Activated T-helper 1 cell treated with anti-CD3 and anti-CD28 coated beads, Interleukin-12 subunit alpha, Interleukin-12 subunit beta, Interleukin-2, Interleukin-4 antibody, amounts not matched to agents 30 ng/mL and 10 ng/mL and 1 ng/mL, durations not matched to agents 14 hours and 24 hours and 36 hours (primary cell): ENCODE measurements at regions of chr1 and their contacts with region 1.

Region 1: DNA sequence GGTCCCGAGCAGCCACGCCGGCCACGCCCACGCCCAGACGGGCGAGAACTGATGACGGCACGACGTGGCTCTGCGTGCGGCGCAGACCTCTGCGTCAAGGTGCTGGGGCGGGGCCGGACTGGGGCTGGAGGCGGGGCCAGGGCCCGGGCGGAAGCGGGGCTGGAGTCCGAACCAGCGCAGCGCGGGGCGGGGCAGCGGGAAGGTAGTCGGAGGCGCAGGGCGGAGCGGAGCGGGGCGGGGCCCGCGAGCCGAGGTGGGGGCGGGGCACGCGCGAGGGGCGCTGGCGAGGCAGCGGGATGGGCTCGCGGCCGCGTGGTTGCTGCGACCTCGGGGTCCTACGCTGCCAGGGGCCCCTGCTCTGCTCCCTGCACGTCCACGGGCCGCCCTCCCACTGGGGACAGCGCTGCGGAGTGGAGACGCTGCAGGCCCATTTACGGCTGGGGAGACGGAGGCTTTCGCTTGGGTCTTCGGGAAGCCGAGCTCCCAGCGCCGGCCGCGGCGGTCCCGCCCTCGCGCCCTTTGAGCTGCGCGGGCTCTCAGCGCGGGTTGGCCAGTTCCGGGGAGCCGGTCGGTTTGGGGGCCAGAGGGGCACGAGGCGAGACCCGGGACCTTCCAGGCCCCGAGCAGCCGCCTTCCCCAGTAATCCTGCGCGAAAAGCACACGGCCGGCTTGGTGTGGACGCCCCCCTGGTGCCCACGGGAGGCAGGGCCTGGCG is at the start of gene PEX10:
- DNase-seq: peak; percentile 99
- H3K4me3 Mint-ChIP-seq: peak within 1 kb of the TSS; percentile 90
- H3K27ac Mint-ChIP-seq: peak within 1 kb of the TSS; percentile 89
- H3K4me1 Mint-ChIP-seq: peaks cover 38% of the 10 kb centered on the region
- H3K27me3 Mint-ChIP-seq: no peaks in the 10 kb centered on the region
- total RNA-seq, gene PEX10: 22.4 and 24.0 TPM in 2 replicates

Region 2: GRCh38 chr1:2133039-2133878 is 279.4 kb before region 1 on chr1:
- intact Hi-C with region 1: loop called (anchors 1 kb)
- DNase-seq: peak; percentile 95
- H3K4me3 Mint-ChIP-seq: peak overlapping the region; percentile 73
- H3K27ac Mint-ChIP-seq: peak overlapping the region; percentile 48
- H3K4me1 Mint-ChIP-seq: peaks cover 6% of the 10 kb centered on the region
- H3K27me3 Mint-ChIP-seq: peaks cover 8% of the 10 kb centered on the region

Region 3: DNA sequence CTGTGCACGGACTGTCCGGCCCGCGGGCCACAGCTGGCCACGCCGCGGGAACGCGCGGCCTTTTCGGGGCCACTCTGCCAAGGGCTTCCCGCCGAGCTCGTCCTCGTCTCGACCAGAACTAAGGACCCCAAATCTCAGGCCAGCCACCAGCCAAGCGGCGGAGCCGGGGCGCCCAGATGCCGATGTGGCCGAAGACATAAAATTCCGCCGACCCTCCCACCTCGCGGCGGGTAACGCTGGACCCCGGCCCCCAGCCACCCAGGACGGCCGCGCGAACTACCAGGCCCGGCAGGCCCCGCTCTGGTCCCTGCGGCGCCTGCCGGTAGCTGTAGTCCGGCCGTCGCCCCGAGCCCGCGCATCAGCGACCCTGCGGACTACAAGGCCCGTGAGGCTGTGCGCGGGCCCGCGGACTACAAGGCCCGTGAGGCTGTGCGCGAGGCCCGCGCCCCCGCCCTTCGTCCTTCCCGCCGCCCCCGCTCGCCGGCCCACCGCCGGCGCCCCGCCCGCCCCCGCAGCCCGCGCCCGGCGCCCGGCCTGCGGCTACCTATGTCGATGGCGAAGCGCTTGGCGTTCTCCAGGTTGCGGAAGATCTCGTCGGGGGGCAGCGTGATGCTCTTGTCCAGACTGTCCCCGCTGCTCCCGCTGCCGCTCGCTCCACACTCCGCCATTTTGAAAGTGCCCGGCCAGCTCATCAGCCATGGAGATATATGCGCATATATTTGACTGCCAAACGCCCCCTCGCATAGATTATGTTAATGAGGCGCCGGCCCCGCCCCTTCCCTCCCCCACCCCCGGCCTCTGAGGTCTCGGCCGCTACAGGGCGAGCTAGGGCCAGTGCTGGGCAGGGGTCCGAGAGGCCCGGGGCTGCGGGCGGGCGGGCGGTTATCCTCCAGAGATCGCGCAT is 113.5 kb after region 1 on chr1 and contains the start of gene PANK4:
- intact Hi-C with region 1: loop called (anchors 1 kb)
- DNase-seq: peak; percentile 86
- H3K4me3 Mint-ChIP-seq: peak within 1 kb of the TSS; percentile 94
- H3K27ac Mint-ChIP-seq: peak within 1 kb of the TSS; percentile 98
- H3K4me1 Mint-ChIP-seq: peaks cover 38% of the 10 kb centered on the region
- H3K27me3 Mint-ChIP-seq: peaks cover 15% of the 10 kb centered on the region
- total RNA-seq, gene PANK4: 65.6 and 67.6 TPM in 2 replicates

Region 4: GRCh38 chr1:2578758-2579118 is 166.1 kb after region 1 on chr1:
- intact Hi-C with region 1: loop called (anchors 2 kb)
- DNase-seq: no peak
- H3K4me3 Mint-ChIP-seq: peak overlapping the region; percentile 42
- H3K27ac Mint-ChIP-seq: peak overlapping the region; percentile 95
- H3K4me1 Mint-ChIP-seq: peaks cover 83% of the 10 kb centered on the region
- H3K27me3 Mint-ChIP-seq: no peaks in the 10 kb centered on the region

Region 5: GRCh38 chr1:2642560-2643413 is 230.1 kb after region 1 on chr1:
- intact Hi-C with region 1: loop called (anchors 1 kb)
- DNase-seq: peak; percentile 93
- H3K4me3 Mint-ChIP-seq: peak overlapping the region; percentile 85
- H3K27ac Mint-ChIP-seq: peak overlapping the region; percentile 93
- H3K4me1 Mint-ChIP-seq: no peaks in the 10 kb centered on the region
- H3K27me3 Mint-ChIP-seq: no peaks in the 10 kb centered on the region

Region 6: DNA sequence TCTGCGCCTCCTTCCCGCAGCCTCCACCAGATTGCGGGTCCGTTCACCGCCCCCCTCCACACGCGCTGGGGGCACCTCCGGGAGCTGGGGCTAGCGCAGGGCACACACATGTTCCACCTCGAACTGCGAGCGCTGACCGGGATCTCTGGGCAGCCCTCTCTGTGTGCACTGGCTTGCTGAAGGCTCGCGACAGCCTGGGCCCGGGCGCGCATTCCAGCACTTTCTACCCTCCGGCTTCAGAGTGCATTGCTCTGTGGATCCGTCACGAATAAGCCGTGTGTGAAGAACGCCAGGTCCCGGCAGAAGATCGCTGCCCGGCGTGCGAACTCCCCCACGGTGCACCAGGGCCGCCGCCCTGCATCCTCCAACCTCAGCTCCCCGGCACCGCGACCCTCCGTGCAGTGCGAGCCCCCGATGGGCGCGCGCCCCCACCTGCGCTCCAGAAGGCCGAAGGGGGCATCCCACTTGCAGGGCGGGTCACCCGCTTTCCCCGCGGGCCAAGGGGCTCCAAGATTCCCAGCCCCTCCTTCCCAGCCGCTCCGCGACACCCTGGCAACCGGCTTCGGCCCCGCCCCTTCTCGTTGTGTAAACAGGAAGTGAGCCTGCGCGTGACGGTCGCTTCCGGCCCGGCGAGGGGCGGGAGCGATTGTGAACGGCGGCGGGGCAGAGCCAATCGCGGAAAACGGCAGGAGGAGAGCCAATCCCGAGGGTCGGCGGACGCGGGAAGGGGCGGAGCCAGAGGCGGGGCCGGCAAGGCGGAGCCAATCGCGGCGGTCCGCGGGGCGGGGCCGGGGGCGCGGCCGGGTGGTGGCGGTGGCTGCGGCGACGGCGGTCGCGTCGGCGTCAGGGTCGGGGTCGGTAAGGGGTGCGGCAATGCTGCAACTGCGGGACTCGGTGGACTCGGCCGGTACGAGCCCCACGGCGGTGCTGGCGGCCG is 1211.8 kb after region 1 on chr1 and contains the start of gene TPRG1L:
- intact Hi-C with region 1: loop called (anchors 10 kb)
- DNase-seq: peak; percentile 98
- H3K4me3 Mint-ChIP-seq: peak within 1 kb of the TSS; percentile 94
- H3K27ac Mint-ChIP-seq: peak within 1 kb of the TSS; percentile 93
- H3K4me1 Mint-ChIP-seq: peaks cover 27% of the 10 kb centered on the region
- H3K27me3 Mint-ChIP-seq: peaks cover 8% of the 10 kb centered on the region
- total RNA-seq, gene TPRG1L: 10.3 and 12.5 TPM in 2 replicates

Region 7: DNA sequence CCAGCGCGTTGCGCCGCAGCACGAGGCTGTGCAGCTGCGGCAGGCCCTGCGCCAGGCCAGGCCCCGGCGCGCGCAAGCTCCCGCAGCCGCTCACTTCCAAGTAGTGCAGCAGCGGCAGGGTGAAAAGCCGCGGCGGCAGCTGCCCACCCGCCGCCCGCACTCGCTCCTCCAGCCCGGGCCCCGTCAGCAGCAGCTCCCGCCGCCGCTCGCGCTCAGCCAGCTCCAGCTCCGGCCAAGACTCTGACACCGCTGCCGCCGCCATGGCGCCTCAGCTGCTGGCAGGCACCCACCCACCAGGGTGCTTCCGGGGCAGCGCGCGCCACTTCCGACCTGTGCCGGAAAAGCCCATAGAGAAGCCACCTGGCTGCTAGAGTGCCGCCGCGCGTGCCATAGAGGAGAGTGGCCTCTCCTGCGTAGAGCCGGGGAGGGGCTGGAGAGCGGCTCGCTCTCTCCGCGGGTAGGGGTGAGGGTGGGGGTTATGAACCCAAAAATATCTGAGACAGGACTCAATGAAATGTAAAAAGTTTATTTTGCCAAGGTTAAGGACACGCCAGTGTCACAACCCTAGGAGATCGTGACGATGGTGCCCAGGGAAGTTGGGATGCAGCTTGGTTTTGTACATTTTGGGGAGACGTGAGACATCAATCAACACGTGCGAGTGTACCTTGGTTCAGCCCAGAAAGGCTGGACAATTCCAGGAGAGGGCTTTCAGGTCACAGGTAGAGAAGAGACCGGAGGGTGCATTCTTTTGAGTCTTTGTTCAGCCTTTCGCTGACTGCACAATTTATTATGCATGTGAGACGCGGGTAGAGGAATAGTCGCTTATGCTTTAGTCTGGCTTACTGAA is 1383.8 kb after region 1 on chr1 and contains the start of gene LRRC47:
- intact Hi-C with region 1: loop called (anchors 10 kb)
- DNase-seq: peak; percentile 92
- H3K4me3 Mint-ChIP-seq: peak within 1 kb of the TSS; percentile 91
- H3K27ac Mint-ChIP-seq: peak within 1 kb of the TSS; percentile 89
- H3K4me1 Mint-ChIP-seq: peaks cover 42% of the 10 kb centered on the region
- H3K27me3 Mint-ChIP-seq: peaks cover 5% of the 10 kb centered on the region
- total RNA-seq, gene LRRC47: 45.2 and 50.1 TPM in 2 replicates